ENCODE measurements at regions of chr16 and their contacts with region 1.

Region 1: DNA sequence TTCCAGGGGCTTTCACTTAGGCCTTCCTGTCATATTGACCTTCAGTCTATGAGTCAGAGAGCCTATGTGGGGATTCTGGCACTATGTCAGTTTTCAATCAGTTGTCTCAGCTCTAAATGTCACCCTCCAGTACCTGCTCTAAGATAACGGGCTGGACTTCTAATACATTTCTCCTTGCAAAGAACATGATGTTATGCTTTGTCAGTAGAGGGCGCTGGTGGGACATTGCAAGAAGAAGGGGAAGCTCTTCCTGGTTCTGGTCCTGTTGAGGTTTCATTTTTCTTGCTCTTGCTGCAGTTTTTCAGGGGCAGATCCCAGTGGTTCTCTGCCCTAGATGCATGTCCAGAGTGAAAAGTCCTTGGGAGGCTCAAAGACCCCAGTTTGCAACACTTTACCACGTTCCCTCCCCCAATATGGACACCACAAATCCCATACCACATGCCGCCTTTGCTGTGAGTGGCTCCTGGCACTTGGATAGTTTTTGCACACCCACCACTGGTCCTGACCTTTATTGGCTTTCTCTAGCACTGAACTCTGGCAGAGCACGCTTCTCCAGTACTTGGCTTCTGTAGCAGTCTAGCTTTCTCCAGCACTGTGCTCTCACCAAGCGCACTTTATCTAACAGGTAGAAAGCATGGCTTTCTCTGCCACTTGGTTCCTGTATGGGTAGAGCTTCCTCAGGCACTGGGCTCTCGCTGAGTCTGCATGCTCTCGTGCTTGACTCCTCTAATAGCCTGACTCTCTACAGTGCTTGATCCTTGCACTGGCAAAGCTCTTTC is 49.0 kb downstream of the BCL7C start:
- DNase-seq: peak; percentile 93
- H3K4me3 ChIP-seq: peak overlapping the region; percentile 20 to 40 (median 32)
- H3K27ac ChIP-seq: peak overlapping the region; percentile 4 to 52 (median 40)
- H3K4me1 ChIP-seq: peaks cover 11 to 15% (median 13%) of the 10 kb centered on the region in 4 donors
- H3K27me3 ChIP-seq: no peaks in the 10 kb centered on the region
- CTCF ChIP-seq: peak; percentile 82 to 90 (median 84)
- EP300 ChIP-seq: no peak
- POLR2A ChIP-seq: no peak

Region 2: DNA sequence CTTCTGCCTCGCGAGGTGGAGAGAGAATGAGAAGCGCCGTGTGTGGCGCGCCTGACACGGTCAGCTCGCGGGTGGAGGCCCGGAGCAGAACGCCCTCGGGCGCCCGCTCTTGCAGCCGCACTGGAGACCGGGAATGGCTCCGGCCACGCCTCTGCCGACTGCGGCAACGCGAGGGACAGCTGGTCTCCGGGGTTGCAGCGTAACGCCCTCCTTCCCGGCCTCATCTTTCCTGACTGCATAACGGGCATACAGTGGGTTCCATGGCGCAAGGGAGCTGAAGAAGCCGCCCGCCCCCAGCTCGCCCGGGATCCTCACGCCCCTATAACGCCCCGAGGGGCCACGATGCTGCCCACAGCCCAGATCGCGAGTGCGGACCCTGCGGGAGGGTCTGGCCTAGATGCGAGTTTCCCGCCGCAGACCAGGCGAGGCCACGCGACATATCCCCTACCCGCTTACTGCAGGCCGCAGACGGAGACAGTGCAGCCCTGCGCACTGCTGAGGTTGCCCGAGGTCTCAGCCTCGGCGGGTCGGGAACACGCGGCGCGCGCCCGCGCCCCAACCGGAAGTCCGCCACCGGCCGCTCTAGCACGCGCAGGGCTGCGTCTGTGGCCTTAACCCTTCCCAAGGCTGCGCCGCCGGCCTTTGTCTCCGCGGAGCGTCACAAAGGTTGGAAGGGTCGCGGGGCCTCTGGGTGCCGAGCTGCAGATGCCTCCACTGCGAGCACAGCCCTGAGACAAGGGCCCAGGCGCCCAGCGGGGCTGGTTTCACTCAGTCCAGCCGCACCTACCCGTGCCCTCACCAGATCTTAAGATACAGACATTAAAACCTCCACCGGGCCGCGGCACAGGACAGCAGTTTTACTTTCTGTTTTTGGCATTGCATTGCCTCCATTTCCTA is 30.2 kb after region 1 on chr16:
- intact Hi-C with region 1: loop called (anchors 2 kb)
- DNase-seq: peak; percentile 95
- H3K4me3 ChIP-seq: peak overlapping the region; percentile 65 to 96 (median 74)
- H3K27ac ChIP-seq: peak overlapping the region; percentile 78 to 91 (median 87)
- H3K4me1 ChIP-seq: peaks cover 20 to 38% (median 30%) of the 10 kb centered on the region in 4 donors
- H3K27me3 ChIP-seq: no peaks in the 10 kb centered on the region
- CTCF ChIP-seq: no peak
- EP300 ChIP-seq: no peak
- POLR2A ChIP-seq: peak; percentile 29

Region 3: GRCh38 chr16:30901201-30902028 is 56.6 kb after region 1 on chr16:
- intact Hi-C with region 1: loop called (anchors 2 kb)
- DNase-seq: no peak
- H3K4me3 ChIP-seq: peak overlapping the region; percentile 63 to 68 (median 65)
- H3K27ac ChIP-seq: peak overlapping the region; percentile 84 to 91 (median 89)
- H3K4me1 ChIP-seq: peaks cover 10 to 44% (median 35%) of the 10 kb centered on the region in 4 donors
- H3K27me3 ChIP-seq: no peaks in the 10 kb centered on the region
- CTCF ChIP-seq: no peak
- EP300 ChIP-seq: no peak
- POLR2A ChIP-seq: no peak

Region 4: DNA sequence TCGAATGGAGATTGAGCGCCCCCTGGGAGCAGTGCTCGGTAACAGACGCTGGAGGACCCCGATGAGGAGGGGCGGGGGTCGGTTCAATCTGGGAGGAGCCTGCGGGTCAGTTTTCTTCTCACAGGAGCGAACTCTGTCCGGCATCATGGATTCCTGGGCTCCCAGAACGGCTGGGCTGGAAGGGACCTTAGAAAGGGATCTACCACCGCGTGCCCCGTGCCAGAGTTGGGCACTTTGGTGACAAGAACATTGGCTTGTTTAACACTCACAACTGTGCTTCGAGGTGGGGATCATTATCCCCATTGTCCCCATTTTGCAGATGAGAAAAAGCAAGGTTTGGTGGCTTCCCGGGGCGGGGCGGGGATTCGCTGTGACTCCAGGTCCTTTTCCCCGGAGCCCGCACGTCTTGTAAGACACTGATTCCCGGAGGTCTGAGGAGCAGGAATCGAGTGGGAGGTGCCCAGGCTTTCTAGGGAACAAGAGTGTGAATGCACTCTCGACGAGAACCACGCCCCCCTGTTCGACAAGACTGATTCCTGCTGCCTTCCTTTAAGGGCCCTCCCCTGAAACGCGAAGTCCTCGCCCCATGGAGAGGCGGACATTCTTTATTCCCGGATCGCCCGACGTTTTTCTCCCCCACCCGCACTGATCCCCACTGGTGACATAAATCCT is 77.0 kb after region 1 on chr16:
- intact Hi-C with region 1: loop called (anchors 2 kb)
- DNase-seq: peak; percentile 97
- H3K4me3 ChIP-seq: peak overlapping the region; percentile 62 to 83 (median 76)
- H3K27ac ChIP-seq: peak overlapping the region; percentile 87 to 96 (median 94)
- H3K4me1 ChIP-seq: peaks cover 16 to 48% (median 32%) of the 10 kb centered on the region in 4 donors
- H3K27me3 ChIP-seq: no peaks in the 10 kb centered on the region
- CTCF ChIP-seq: peak; percentile 87 to 94 (median 91)
- EP300 ChIP-seq: no peak
- POLR2A ChIP-seq: no peak

Measured in esophagus muscularis mucosa (tissue), 4 donors.